ENCODE measurements at regions of chr14 and their contacts with region 1.

Region 1: GRCh38 chr14:98138666-98139065 is 1133.3 kb downstream of the BCL11B start:
- DNase-seq: peak; percentile 35 to 87 (median 81)
- ATAC-seq: peak; percentile 75
- H3K4me3 ChIP-seq: peak overlapping the region; percentile 52
- H3K4me3 Mint-ChIP-seq: peak overlapping the region; percentile 75 to 99 (median 93)
- H3K27ac ChIP-seq: peak overlapping the region; percentile 78
- H3K27ac Mint-ChIP-seq: peak overlapping the region; percentile 90 to 99 (median 96)
- H3K4me1 ChIP-seq: peaks cover 70 to 76% of the 10 kb centered on the region in 2 donors
- H3K4me1 Mint-ChIP-seq: peaks cover 66 to 100% (median 96%) of the 10 kb centered on the region in 7 donors
- H3K27me3 ChIP-seq: no peaks in the 10 kb centered on the region
- H3K27me3 Mint-ChIP-seq: no peaks in the 10 kb centered on the region

Region 2: DNA sequence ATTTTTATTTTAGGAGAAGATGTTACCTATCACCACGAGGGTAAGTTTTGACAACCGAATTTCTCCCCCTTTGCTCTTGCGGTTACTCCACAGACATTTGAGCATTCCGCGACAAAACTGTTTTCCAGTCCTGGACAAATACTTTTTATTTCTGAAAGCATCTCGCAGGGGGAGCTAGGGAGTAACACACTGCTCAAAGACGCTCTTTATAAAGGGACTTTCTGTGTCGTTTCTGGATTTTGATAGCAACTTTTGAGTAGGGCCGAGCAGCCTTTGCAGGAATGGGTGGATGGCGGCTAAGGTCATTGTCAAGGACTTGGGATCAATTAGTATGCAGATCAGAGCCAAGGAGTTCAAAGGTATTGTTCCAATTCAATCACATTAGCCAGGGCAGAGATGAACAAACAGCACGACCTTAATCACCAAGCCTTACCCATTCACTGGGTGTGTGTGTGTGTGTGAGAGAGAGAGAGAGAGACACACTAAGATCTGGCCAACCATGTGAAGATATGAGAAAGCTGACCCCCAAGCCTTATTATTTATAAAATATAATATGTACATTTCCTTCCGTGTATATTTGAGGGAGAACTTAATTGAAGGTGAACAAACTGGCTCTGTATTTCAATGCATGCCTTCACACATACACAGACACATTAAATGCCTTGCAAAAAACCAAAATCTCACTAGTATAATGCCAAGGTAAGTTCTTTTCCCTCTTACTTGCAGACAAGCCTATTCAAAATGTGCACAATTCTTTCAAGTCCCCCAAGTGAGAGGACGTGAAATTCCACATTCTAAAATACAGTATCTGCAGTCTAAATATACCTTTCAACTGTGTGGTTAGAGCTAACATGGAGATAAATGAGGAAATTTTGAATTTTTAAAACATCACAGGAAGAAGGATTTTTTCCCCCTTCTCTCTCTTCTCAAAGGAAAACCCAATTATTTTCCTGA is 727.7 kb before region 1 on chr14:
- CTCF ChIA-PET with region 1: no interaction called
- POLR2A ChIA-PET with region 1: no interaction called
- intact Hi-C with region 1: loop called in 1 of 2 experiments (anchors 5 kb)
- DNase-seq: peak in 1 of 9 donors; percentile 9
- ATAC-seq: no peak
- H3K4me3 ChIP-seq: no peak overlapping the region
- H3K4me3 Mint-ChIP-seq: no peak overlapping the region
- H3K27ac ChIP-seq: no peak overlapping the region
- H3K27ac Mint-ChIP-seq: no peak overlapping the region
- H3K4me1 ChIP-seq: peaks cover 15 to 34% of the 10 kb centered on the region in 2 donors
- H3K4me1 Mint-ChIP-seq: peaks cover 0 to 30% (median 21%) of the 10 kb centered on the region in 7 donors
- H3K27me3 ChIP-seq: peaks cover 0 to 6% of the 10 kb centered on the region in 2 donors
- H3K27me3 Mint-ChIP-seq: peaks cover 0 to 11% (median 1%) of the 10 kb centered on the region in 5 donors

Region 3: GRCh38 chr14:97994020-97994531 is 144.6 kb before region 1 on chr14:
- CTCF ChIA-PET with region 1: interaction called, 42 read pairs
- POLR2A ChIA-PET with region 1: interaction called, 11 read pairs
- intact Hi-C with region 1: loop called in 1 of 2 experiments (anchors 1 kb)
- DNase-seq: peak in 8 of 9 donors; percentile 34 to 86 (median 78)
- ATAC-seq: peak; percentile 91
- H3K4me3 ChIP-seq: peak overlapping the region; percentile 33
- H3K4me3 Mint-ChIP-seq: peak overlapping the region; percentile 17 to 77 (median 65)
- H3K27ac ChIP-seq: peak overlapping the region; percentile 63
- H3K27ac Mint-ChIP-seq: peak overlapping the region; percentile 89 to 98 (median 93)
- H3K4me1 ChIP-seq: peaks cover 37 to 80% of the 10 kb centered on the region in 2 donors
- H3K4me1 Mint-ChIP-seq: peaks cover 37 to 89% (median 87%) of the 10 kb centered on the region in 7 donors
- H3K27me3 ChIP-seq: no peaks in the 10 kb centered on the region
- H3K27me3 Mint-ChIP-seq: no peaks in the 10 kb centered on the region

Region 4: GRCh38 chr14:98210045-98210672 is 71.5 kb after region 1 on chr14:
- CTCF ChIA-PET with region 1: interaction called, 4 read pairs
- POLR2A ChIA-PET with region 1: interaction called, 38 read pairs
- intact Hi-C with region 1: no loop called
- DNase-seq: peak in 5 of 9 donors; percentile 36 to 58 (median 50)
- ATAC-seq: peak; percentile 68
- H3K4me3 ChIP-seq: peak overlapping the region; percentile 34
- H3K4me3 Mint-ChIP-seq: peak overlapping the region; percentile 65 to 86 (median 74)
- H3K27ac ChIP-seq: peak overlapping the region; percentile 83
- H3K27ac Mint-ChIP-seq: peak overlapping the region; percentile 91 to 100 (median 97)
- H3K4me1 ChIP-seq: peaks cover 44 to 82% of the 10 kb centered on the region in 2 donors
- H3K4me1 Mint-ChIP-seq: peaks cover 0 to 95% (median 57%) of the 10 kb centered on the region in 7 donors
- H3K27me3 ChIP-seq: no peaks in the 10 kb centered on the region
- H3K27me3 Mint-ChIP-seq: peaks cover 0 to 1% (median 0%) of the 10 kb centered on the region in 5 donors

Region 5: DNA sequence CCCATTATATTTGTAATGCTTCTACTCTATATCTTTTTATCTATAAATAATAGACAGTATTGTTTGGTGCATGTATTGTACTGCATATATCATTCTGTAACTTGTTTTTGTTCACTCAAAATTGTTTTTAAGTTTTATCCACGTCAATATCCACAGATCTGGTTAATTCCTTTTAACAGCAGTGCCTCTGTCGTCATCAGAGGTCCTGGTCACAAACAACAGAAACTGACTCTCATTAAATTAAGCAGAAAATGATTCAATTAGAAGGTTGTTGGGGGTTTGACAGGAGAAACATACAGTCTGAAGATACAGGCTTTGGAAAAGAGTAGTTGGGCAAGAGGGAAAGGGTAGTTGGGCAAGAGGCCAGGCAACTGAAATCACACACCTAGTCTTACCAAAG is 531.9 kb after region 1 on chr14:
- CTCF ChIA-PET with region 1: no interaction called
- POLR2A ChIA-PET with region 1: no interaction called
- intact Hi-C with region 1: loop called in 1 of 2 experiments (anchors 10 kb)
- DNase-seq: no peak
- ATAC-seq: no peak
- H3K4me3 ChIP-seq: no peak overlapping the region
- H3K4me3 Mint-ChIP-seq: no peak overlapping the region
- H3K27ac ChIP-seq: no peak overlapping the region
- H3K27ac Mint-ChIP-seq: no peak overlapping the region
- H3K4me1 ChIP-seq: no peaks in the 10 kb centered on the region
- H3K4me1 Mint-ChIP-seq: peaks cover 0 to 1% (median 0%) of the 10 kb centered on the region in 7 donors
- H3K27me3 ChIP-seq: no peaks in the 10 kb centered on the region
- H3K27me3 Mint-ChIP-seq: peaks cover 0 to 36% (median 0%) of the 10 kb centered on the region in 5 donors

Region 6: GRCh38 chr14:99230208-99231151 is 1091.8 kb after region 1 on chr14:
- CTCF ChIA-PET with region 1: interaction called, 3 read pairs
- POLR2A ChIA-PET with region 1: interaction called, 3 read pairs
- intact Hi-C with region 1: loop called in 1 of 2 experiments (anchors 1 kb)
- DNase-seq: peak; percentile 54 to 91 (median 84)
- ATAC-seq: peak; percentile 82
- H3K4me3 ChIP-seq: peak overlapping the region; percentile 27
- H3K4me3 Mint-ChIP-seq: peak overlapping the region; percentile 79 to 94 (median 86)
- H3K27ac ChIP-seq: peak overlapping the region; percentile 98
- H3K27ac Mint-ChIP-seq: peak overlapping the region; percentile 94 to 100 (median 99)
- H3K4me1 ChIP-seq: peaks cover 94 to 96% of the 10 kb centered on the region in 2 donors
- H3K4me1 Mint-ChIP-seq: peaks cover 65 to 96% (median 92%) of the 10 kb centered on the region in 7 donors
- H3K27me3 ChIP-seq: no peaks in the 10 kb centered on the region
- H3K27me3 Mint-ChIP-seq: no peaks in the 10 kb centered on the region

Measured in naive thymus-derived CD4-positive, alpha-beta T cell (primary cell).